ENCODE measurements at regions of chr13 and their contacts with region 1.

Region 1: DNA sequence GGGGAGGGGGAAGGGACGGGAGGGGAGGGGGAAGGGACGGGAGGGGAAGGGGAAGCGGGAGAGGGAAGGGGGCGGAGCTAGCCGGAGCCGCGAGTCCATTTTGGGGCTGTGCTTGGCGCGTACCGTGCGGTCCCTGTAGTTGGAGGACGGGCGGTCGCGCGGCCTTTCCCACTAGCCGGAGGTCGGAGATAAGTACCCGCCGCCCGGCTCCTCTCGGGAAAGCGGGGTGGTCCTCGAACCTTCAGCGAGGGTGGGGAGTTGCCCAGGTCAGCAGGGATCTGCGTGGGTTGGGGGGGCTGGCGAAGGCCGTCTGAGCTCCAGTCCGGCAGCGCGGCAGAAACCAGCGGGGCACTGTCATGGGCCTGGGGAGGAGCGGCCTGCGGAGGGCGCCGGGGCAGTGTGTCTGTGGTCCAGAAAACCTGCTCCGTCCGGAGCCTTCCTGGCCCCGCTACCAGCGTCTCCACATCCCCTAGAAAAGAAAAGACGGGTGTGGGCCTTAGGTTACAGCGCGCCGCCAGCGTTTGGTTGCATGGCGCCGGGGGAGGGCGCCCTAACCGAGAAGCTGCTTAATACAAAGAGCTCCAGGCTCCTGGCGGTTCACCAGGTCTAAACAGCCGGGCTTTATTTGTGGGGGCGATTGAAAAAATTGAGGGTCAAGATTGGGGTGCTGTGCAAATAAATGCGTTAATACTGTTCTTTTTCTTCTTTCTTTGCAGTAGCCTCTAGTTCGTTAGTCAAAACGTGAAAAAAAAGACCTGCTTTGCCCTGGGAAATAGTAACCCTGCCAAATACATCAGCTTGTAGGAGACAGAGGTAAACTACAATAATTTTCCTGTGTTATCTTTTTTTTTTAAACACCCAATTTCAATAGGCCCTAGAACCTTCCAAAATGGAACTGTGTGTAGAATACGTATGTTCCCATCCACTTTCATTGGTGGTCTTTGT is at the start of gene TRIM13:
- DNase-seq: peak; percentile 79
- H3K4me3 ChIP-seq: peak within 1 kb of the TSS; percentile 69 to 85 (median 79)
- H3K27ac ChIP-seq: peak within 1 kb of the TSS; percentile 79
- H3K4me1 ChIP-seq: peaks cover 13% of the 10 kb centered on the region
- H3K27me3 ChIP-seq: no peaks in the 10 kb centered on the region
- CTCF ChIP-seq: peak; percentile 58 to 86
- total RNA-seq, gene TRIM13: 17.9 to 21.0 TPM

Region 2: GRCh38 chr13:48094781-48095502 is 1902.3 kb before region 1 on chr13 and contains the start of gene MED4:
- CTCF ChIA-PET with region 1: interaction called, 14 read pairs
- dilution Hi-C with region 1: no loop called
- in situ Hi-C with region 1: no loop called
- intact Hi-C with region 1: no loop called
- DNase-seq: peak; percentile 92
- H3K4me3 ChIP-seq: peak within 1 kb of the TSS; percentile 73 to 98 (median 86)
- H3K27ac ChIP-seq: peak within 1 kb of the TSS; percentile 83
- H3K4me1 ChIP-seq: peaks cover 10% of the 10 kb centered on the region
- H3K27me3 ChIP-seq: no peaks in the 10 kb centered on the region
- CTCF ChIP-seq: peak; percentile 98 to 100
- total RNA-seq, gene MED4: 24.8 to 43.1 TPM

Region 3: DNA sequence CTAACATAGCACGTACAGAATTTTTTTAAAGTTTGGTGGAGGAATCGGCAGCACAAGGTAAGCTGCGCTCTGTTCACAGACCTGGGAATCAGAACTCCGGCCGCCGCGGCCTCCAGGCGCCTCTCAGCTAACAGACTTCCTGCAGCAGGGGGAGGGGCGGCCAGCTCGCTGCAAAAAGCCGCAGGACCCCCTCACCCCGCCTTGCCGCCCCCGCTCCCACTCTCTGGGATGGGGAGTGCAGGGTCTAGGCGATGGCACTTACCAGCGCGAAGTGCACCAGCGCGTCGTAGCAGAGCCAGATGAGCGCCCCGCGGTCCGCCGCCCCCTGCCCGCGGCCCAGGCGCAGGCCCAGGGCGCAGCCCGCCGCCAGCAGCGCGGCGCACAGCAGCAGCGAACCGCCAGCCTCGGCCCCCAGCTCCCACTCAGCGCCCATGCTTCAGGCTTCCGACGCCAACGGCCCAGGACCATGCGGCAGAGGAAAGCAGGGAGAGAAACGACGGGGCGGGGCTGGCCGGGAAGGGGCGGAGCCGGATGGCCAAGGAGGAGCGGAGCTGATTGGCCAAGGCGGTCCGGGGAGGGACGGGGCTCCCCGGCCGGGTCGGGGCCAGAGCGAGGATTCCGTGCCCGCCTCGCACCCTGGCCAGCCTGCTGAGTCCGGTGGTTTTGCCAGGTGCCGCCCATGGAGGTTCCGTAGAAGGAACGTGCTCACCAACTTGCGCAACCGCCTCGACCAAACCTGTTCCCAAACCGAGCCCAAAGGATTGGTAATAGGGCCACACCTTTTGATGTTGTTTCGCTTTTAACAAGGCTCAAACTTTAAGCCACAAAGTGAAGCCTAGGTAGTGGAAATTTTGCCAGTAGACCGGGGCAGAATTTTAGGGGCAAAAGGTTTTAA is 306.0 kb before region 1 on chr13 and contains the start of gene EBPL:
- CTCF ChIA-PET with region 1: no interaction called
- dilution Hi-C with region 1: no loop called
- in situ Hi-C with region 1: no loop called
- intact Hi-C with region 1: no loop called
- DNase-seq: peak; percentile 98
- H3K4me3 ChIP-seq: peak within 1 kb of the TSS; percentile 61 to 73 (median 61)
- H3K27ac ChIP-seq: peak within 1 kb of the TSS; percentile 80
- H3K4me1 ChIP-seq: peaks cover 5% of the 10 kb centered on the region
- H3K27me3 ChIP-seq: no peaks in the 10 kb centered on the region
- CTCF ChIP-seq: no peak
- total RNA-seq, gene EBPL: 26.7 to 46.1 TPM

Region 4: GRCh38 chr13:50123862-50124536 is 126.8 kb after region 1 on chr13:
- CTCF ChIA-PET with region 1: interaction called, 5 read pairs
- dilution Hi-C with region 1: no loop called
- in situ Hi-C with region 1: no loop called
- intact Hi-C with region 1: loop called (anchors 2 kb)
- DNase-seq: peak; percentile 92
- H3K4me3 ChIP-seq: peak overlapping the region; percentile 73 to 97 (median 92)
- H3K27ac ChIP-seq: peak overlapping the region; percentile 80
- H3K4me1 ChIP-seq: peaks cover 16% of the 10 kb centered on the region
- H3K27me3 ChIP-seq: no peaks in the 10 kb centered on the region
- CTCF ChIP-seq: peak in 1 of 2 donors; percentile 18

Measured in mammary epithelial cell (primary cell).